Activated T-helper 2 cell treated with anti-CD3 and anti-CD28 coated beads, Interferon-gamma antibody, Interleukin-2, Interleukin-4, amounts not matched to agents 10 μg/mL and 5 μg/mL and 100 μg/mL, durations not matched to agents 14 hours and 24 hours and 36 hours (primary cell): ENCODE measurements at regions of chr13 and their contacts with region 1.

Region 1: GRCh38 chr13:38239874-38240273 is 109.8 kb upstream of the UFM1 start:
- DNase-seq: no peak
- H3K4me3 Mint-ChIP-seq: no peak overlapping the region
- H3K27ac Mint-ChIP-seq: no peak overlapping the region
- H3K4me1 Mint-ChIP-seq: no peaks in the 10 kb centered on the region
- H3K27me3 Mint-ChIP-seq: no peaks in the 10 kb centered on the region

Region 2: GRCh38 chr13:38213314-38213713 is 26.6 kb before region 1 on chr13:
- intact Hi-C with region 1: loop called (anchors 1 kb)
- DNase-seq: no peak
- H3K4me3 Mint-ChIP-seq: no peak overlapping the region
- H3K27ac Mint-ChIP-seq: no peak overlapping the region
- H3K4me1 Mint-ChIP-seq: peaks cover 8% of the 10 kb centered on the region
- H3K27me3 Mint-ChIP-seq: no peaks in the 10 kb centered on the region

Region 3: DNA sequence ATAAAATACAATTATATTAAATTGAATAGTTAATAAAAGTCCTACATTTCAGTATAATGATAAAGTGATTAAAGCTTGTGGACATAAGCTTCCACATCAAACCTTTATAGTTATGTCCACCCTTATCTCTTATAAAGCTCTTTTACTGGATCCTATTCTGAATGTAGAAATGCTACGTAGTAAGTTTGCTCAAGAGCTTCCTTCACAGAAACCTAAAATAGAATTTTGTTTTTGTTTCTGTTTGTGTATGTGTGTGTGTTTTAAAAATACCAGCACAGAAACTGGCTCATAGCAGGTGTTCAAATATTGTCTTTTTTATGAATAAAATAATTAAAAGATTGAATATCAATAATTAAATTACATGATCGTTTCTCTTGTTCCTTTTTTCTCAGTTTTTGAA is 88.8 kb after region 1 on chr13:
- intact Hi-C with region 1: no loop called
- DNase-seq: no peak
- H3K4me3 Mint-ChIP-seq: no peak overlapping the region
- H3K27ac Mint-ChIP-seq: no peak overlapping the region
- H3K4me1 Mint-ChIP-seq: no peaks in the 10 kb centered on the region
- H3K27me3 Mint-ChIP-seq: no peaks in the 10 kb centered on the region

Region 4: DNA sequence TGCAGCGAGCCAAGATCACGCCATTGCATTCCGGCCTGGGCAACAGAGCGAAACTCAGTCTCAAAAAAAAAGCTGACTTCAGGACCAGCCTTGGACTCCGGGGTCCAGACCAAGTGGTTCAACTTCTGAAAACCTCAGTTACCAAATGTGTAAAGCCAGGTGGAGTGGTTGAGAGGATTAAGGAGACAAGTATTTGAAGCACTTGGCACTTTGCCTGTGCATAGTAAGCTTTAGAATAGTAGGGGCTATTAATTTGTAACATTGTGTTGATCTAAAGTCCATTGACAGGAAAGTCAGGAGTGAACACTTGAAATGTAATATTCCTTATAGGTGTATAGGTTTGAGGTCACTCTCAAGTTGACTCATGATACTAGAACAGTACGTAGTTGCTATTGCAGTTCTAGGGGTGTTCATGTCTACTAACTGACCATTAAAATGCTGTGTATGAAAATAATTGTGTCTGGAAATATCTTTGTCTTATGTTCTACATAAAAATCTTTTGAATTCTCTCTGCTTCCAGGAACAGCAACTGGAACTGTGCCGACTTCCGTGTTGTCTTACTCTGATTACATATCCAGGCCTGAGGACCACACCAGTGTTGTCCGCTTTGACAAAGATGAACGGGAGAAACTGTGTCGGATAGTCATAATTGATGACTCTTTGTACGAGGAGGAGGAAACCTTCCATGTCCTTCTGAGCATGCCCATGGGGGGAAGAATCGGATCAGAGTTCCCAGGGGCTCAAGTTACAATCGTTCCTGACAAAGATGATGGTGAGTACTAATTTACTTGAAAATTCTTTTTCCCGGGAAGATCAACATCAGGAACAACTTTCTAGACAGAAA is 544.4 kb after region 1 on chr13:
- intact Hi-C with region 1: no loop called
- DNase-seq: no peak
- H3K4me3 Mint-ChIP-seq: no peak overlapping the region
- H3K27ac Mint-ChIP-seq: no peak overlapping the region
- H3K4me1 Mint-ChIP-seq: no peaks in the 10 kb centered on the region
- H3K27me3 Mint-ChIP-seq: peaks cover 1% of the 10 kb centered on the region